Heart right ventricle (tissue), 16 donors: ENCODE measurements at regions of chr20 and their contacts with region 1.

Region 1: DNA sequence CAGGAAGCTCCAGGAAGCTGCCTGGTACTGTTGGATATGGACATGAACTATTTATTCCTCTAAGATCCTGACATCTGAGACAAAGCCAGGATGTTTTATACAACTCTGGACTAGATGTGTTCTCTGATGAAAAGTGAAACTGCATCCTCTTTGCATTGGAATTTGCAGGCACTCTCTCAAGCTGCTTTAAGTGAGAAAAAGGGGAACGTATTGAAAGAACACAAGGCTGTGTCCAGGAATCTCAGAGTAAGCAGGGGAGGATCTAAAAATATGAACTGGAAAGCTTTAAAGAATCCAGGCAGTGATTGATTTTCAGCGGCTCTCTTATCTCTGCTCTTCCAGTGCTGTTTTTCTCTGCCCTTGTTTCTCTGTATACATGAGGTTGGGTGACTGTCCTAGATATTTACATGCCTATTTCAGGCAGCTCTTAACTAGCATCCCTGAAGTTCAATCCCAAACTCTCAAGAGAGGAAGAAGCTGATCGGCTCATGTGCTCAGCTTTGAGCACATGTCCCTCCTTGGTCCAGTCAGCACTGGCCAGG is 193.8 kb downstream of the PLCB4 start:
- DNase-seq: no peak
- ATAC-seq: peak; percentile 24 to 64 (median 53)
- H3K4me3 ChIP-seq: peak overlapping the region in 7 of 10 donors; percentile 10 to 28 (median 22)
- H3K27ac ChIP-seq: peak overlapping the region in 9 of 10 donors; percentile 22 to 78 (median 64)
- H3K4me1 ChIP-seq: peaks cover 7 to 58% (median 38%) of the 10 kb centered on the region in 9 donors
- H3K27me3 ChIP-seq: no peaks in the 10 kb centered on the region
- CTCF ChIP-seq: no peak

Region 2: DNA sequence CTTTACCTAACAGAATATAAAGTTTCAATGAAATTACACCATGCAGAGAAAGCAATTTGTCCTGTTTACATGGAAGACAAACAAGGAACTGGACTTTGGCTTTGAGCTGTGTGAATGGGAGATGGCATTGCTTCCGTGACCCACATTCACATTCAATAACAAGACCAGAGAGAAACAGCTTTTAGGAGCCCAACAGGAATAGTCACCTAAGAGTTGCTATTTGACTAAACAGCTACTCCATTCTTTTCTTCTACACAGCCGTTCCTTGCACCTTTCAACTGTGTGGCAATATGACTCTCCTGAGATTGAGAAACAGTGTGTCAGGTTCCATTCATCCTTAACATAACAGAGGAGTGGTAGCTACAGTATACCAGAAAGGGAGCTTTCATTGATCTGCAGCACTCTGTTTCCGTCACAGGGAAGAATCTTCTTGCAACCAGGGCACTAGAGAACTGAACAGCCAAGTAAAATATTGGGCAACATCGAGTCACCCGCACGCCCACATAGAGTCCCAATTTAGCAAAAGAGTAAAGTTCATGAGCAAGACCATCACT is 1677.5 kb before region 1 on chr20:
- intact Hi-C with region 1: no loop called
- DNase-seq: no peak
- ATAC-seq: no peak
- H3K4me3 ChIP-seq: no peak overlapping the region
- H3K27ac ChIP-seq: no peak overlapping the region
- H3K4me1 ChIP-seq: no peaks in the 10 kb centered on the region
- H3K27me3 ChIP-seq: no peaks in the 10 kb centered on the region
- CTCF ChIP-seq: no peak

Region 3: GRCh38 chr20:9301129-9302090 is 38.7 kb after region 1 on chr20:
- intact Hi-C with region 1: loop called in 1 of 10 experiments (anchors 5 kb)
- DNase-seq: peak in 1 of 2 donors; percentile 50
- ATAC-seq: peak; percentile 55 to 90 (median 81)
- H3K4me3 ChIP-seq: no peak overlapping the region
- H3K27ac ChIP-seq: peak overlapping the region in 7 of 10 donors; percentile 2 to 67 (median 34)
- H3K4me1 ChIP-seq: peaks cover 4 to 41% (median 21%) of the 10 kb centered on the region in 9 donors
- H3K27me3 ChIP-seq: no peaks in the 10 kb centered on the region
- CTCF ChIP-seq: no peak

Region 4: GRCh38 chr20:9407805-9408421 is 145.2 kb after region 1 on chr20:
- intact Hi-C with region 1: no loop called
- DNase-seq: peak in 1 of 2 donors; percentile 62
- ATAC-seq: peak in 6 of 8 donors; percentile 63 to 83 (median 76)
- H3K4me3 ChIP-seq: no peak overlapping the region
- H3K27ac ChIP-seq: no peak overlapping the region
- H3K4me1 ChIP-seq: peaks cover 0 to 7% (median 0%) of the 10 kb centered on the region in 9 donors
- H3K27me3 ChIP-seq: no peaks in the 10 kb centered on the region
- CTCF ChIP-seq: peak; percentile 68 to 91 (median 84)